IMR-90 (cell line): ENCODE measurements at regions of chr11 and their contacts with region 1.

Region 1: GRCh38 chr11:73851046-73851764 is 25.4 kb downstream of the COA4 start:
- DNase-seq: no peak
- ATAC-seq: no peak
- H3K4me3 ChIP-seq: no peak overlapping the region
- H3K27ac ChIP-seq: no peak overlapping the region
- H3K4me1 ChIP-seq: no peaks in the 10 kb centered on the region
- H3K27me3 ChIP-seq: no peaks in the 10 kb centered on the region
- CTCF ChIP-seq: no peak
- POLR2A ChIP-seq: no peak
- RAD21 ChIP-seq: no peak

Region 2: GRCh38 chr11:73795925-73796632 is 55.1 kb before region 1 on chr11:
- CTCF ChIA-PET with region 1: no interaction called
- POLR2A ChIA-PET with region 1: interaction called, 18 read pairs
- dilution Hi-C with region 1: no loop called
- in situ Hi-C with region 1: no loop called
- intact Hi-C with region 1: no loop called
- DNase-seq: no peak
- ATAC-seq: no peak
- H3K4me3 ChIP-seq: no peak overlapping the region
- H3K27ac ChIP-seq: no peak overlapping the region
- H3K4me1 ChIP-seq: no peaks in the 10 kb centered on the region
- H3K27me3 ChIP-seq: no peaks in the 10 kb centered on the region
- CTCF ChIP-seq: no peak
- POLR2A ChIP-seq: no peak
- RAD21 ChIP-seq: no peak

Region 3: GRCh38 chr11:73818846-73819245 is 32.4 kb before region 1 on chr11:
- CTCF ChIA-PET with region 1: interaction called, 3 read pairs
- POLR2A ChIA-PET with region 1: no interaction called
- dilution Hi-C with region 1: no loop called
- in situ Hi-C with region 1: no loop called
- intact Hi-C with region 1: loop called (anchors 5 kb)
- DNase-seq: peak; percentile 55
- ATAC-seq: no peak
- H3K4me3 ChIP-seq: no peak overlapping the region
- H3K27ac ChIP-seq: no peak overlapping the region
- H3K4me1 ChIP-seq: no peaks in the 10 kb centered on the region
- H3K27me3 ChIP-seq: no peaks in the 10 kb centered on the region
- CTCF ChIP-seq: no peak
- POLR2A ChIP-seq: no peak
- RAD21 ChIP-seq: no peak